ENCODE measurements at regions of chr20 and their contacts with region 1.

Region 1: DNA sequence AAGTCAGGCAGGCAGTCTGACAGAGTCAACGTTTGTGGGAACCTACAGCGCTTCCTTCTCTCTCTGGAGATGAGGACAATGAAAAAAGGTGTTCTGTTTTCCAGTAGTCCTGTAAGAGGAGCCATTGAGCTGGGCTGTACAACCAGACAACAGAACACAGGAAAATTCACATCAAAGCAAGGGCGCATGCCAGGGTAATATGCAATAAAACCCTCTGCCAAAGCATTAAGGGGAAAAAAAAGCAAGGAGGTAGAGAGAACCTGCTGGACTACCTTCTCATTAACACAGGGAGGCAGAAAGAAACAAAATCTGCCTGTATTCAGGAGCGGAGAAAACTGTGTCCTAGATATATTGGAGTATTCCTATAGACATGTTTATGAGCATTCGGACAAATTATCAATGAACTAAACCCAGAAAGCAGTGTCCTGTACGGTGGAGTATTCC is 1.3 kb downstream of the RNF24 start:
- DNase-seq: no peak
- H3K4me3 ChIP-seq: peak overlapping the region; percentile 92 to 97
- H3K27ac ChIP-seq: peak overlapping the region; percentile 92
- H3K4me1 ChIP-seq: peaks cover 18% of the 10 kb centered on the region
- H3K27me3 ChIP-seq: no peaks in the 10 kb centered on the region
- CTCF ChIP-seq: peak in 2 of 3 experiments; percentile 28 to 37
- POLR2A ChIP-seq: no peak

Region 2: GRCh38 chr20:4064144-4064909 is 50.3 kb after region 1 on chr20:
- intact Hi-C with region 1: loop called (anchors 10 kb)
- DNase-seq: peak in 1 of 2 donors; percentile 95
- H3K4me3 ChIP-seq: no peak overlapping the region
- H3K27ac ChIP-seq: peak overlapping the region; percentile 74
- H3K4me1 ChIP-seq: peaks cover 39% of the 10 kb centered on the region
- H3K27me3 ChIP-seq: no peaks in the 10 kb centered on the region
- CTCF ChIP-seq: no peak
- POLR2A ChIP-seq: no peak